ENCODE measurements at regions of chr5 and their contacts with region 1.

Region 1: DNA sequence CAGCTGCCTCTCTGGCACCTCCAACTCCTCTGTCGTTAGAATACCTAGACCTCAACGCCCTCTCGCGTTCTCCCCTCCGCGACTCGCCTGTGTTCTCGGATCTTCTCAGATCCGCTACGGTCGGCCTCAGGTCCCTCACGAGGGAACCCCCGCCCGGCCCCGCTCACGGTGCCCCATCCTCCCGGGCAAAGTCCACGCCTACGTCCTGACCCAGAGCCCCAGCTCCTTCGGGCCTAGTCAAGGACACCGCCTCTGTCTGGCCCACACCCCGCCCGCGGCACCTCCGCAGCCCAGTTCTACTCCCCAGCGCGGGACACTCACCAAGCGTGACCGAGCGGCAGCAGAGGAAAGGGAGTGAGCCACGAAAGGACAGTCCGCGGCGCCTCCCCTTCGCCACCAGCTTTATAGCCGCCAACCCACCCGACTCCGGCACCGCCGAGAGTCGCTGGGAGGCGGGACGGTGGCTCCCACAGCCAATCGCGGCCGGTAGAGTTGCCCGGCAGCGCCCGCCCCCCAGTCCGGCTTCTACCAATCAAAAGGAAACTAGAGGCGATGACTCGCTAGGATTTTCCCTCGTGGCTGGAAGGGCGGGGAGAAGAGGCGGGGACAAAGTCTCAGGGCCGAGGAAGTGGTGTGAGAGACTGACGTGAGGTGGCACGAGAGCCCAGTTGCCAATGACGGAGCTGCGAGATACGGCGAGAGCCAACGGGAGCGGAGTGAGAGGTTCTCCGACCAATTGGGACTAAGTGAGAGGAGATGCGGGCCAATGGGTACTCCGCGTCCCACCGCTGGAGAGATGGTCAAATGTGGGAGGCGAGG is at the start of gene HMGCS1:
- DNase-seq: peak; percentile 98 to 99
- ATAC-seq: peak; percentile 99
- H3K4me3 ChIP-seq: peak within 1 kb of the TSS; percentile 77 to 93 (median 83)
- H3K27ac ChIP-seq: peak within 1 kb of the TSS; percentile 89 to 94 (median 90)
- H3K4me1 ChIP-seq: peaks cover 18 to 28% of the 10 kb centered on the region in 2 donors
- H3K27me3 ChIP-seq: no peaks in the 10 kb centered on the region
- CTCF ChIP-seq: peak in 1 of 5 experiments; percentile 14
- POLR2A ChIP-seq: peak; percentile 87 to 96
- total RNA-seq, gene HMGCS1: 6.1 to 15.0 (median 8.2) TPM

Region 2: GRCh38 chr5:42908509-42909488 is 404.4 kb before region 1 on chr5:
- in situ Hi-C with region 1: loop called in 1 of 4 experiments (anchors 25 kb)
- intact Hi-C with region 1: loop called (anchors 10 kb)
- DNase-seq: peak; percentile 75 to 81
- ATAC-seq: peak; percentile 92 to 96
- H3K4me3 ChIP-seq: peak overlapping the region; percentile 52 to 64 (median 56)
- H3K27ac ChIP-seq: peak overlapping the region in 1 of 4 donors; percentile 11
- H3K4me1 ChIP-seq: no peaks in the 10 kb centered on the region
- H3K27me3 ChIP-seq: no peaks in the 10 kb centered on the region
- CTCF ChIP-seq: peak; percentile 73 to 87 (median 83)
- POLR2A ChIP-seq: no peak

Region 3: DNA sequence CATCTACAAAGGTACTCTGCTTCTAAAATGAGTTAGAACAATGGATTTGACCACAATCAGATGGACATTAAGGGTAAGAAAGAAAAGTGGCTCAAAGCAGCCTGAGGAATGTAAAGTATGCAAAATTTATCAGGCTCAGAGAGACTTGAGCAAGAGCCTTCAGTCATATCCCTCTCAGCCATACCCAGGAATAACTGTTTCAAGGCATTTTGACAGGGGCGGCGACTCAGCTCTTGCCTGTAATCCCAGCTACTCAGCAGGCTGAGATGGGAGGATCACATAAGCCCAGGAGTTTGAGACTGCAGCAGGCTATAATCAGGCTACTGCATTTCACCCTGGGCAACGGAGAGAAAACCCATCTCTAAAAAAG is 234.3 kb before region 1 on chr5:
- in situ Hi-C with region 1: loop called in 1 of 4 experiments (anchors 25 kb)
- intact Hi-C with region 1: no loop called
- DNase-seq: no peak
- ATAC-seq: no peak
- H3K4me3 ChIP-seq: no peak overlapping the region
- H3K27ac ChIP-seq: no peak overlapping the region
- H3K4me1 ChIP-seq: peaks cover 11 to 14% of the 10 kb centered on the region in 2 donors
- H3K27me3 ChIP-seq: no peaks in the 10 kb centered on the region
- CTCF ChIP-seq: no peak
- POLR2A ChIP-seq: no peak

Region 4: DNA sequence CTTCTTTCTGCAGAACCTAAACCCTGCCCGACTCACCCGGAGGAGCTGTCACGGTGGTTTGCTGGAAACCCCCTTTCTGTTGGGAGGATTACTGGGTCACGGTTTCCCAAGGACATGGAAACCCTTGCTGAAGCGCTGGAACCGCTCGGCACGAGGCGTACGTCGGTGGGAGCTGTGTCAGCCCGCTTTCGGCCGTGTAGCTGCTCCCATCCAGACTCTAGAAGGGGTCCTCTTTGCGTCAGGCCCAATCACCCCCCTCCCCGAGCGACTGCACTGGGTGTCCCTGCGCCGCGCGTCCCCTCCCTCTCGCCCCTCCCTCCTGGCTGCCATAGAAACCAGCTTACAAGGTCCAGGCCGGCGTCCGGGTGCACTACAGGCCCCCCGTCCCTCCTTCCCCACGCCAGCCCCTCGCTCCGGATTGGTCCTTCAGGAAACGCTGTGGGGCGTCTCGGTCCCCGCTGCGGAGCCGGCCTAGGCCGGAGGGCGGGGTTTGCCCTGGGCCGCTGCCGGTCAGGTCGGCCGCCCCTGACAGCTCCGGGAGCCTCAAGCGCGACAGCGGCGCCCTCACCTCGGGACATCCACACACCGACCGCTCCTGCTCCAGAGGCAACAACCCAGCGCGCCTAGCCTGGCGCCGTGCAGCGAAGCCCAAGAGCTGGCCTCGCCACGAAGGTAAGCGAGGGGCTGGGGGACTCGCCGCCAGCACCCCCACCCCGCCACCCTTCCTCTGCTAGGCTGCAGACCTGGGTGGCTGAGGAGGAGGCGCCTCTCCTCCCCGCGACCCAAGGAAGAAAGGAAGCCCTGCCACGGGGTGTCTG is 121.3 kb before region 1 on chr5 and contains the start of gene NIM1K:
- in situ Hi-C with region 1: no loop called
- intact Hi-C with region 1: loop called (anchors 5 kb)
- DNase-seq: peak; percentile 19 to 23
- ATAC-seq: peak; percentile 66 to 68
- H3K4me3 ChIP-seq: peak within 1 kb of the TSS; percentile 62 to 75 (median 70)
- H3K27ac ChIP-seq: peak within 1 kb of the TSS; percentile 14 to 68 (median 42)
- H3K4me1 ChIP-seq: peaks cover 0 to 25% of the 10 kb centered on the region in 2 donors
- H3K27me3 ChIP-seq: no peaks in the 10 kb centered on the region
- CTCF ChIP-seq: no peak
- POLR2A ChIP-seq: no peak
- total RNA-seq, gene NIM1K: 0.41 TPM in 1 of 4 donors, not detected in the others

Region 5: DNA sequence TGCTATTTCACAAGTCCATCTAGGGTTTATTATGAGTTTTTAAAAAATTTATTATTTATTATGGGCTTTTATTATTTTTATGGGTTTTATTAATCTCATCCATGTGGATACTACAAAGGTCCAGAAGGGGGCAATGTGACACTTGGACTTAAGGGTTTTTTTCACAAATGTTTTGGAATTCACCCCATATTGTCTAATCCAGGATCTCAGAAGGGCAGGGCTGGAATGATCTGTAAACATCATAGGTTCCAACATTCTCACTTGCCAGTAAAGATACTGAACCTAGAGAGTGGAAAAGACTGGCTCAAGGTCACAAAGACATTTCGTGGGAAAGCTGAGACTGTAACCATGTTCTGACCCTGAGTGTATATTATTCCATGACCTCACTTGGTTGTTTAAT is 85.6 kb before region 1 on chr5:
- in situ Hi-C with region 1: no loop called
- intact Hi-C with region 1: no loop called
- DNase-seq: no peak
- ATAC-seq: no peak
- H3K4me3 ChIP-seq: no peak overlapping the region
- H3K27ac ChIP-seq: no peak overlapping the region
- H3K4me1 ChIP-seq: no peaks in the 10 kb centered on the region
- H3K27me3 ChIP-seq: no peaks in the 10 kb centered on the region
- CTCF ChIP-seq: peak in 1 of 5 experiments; percentile 13
- POLR2A ChIP-seq: no peak

Region 6: DNA sequence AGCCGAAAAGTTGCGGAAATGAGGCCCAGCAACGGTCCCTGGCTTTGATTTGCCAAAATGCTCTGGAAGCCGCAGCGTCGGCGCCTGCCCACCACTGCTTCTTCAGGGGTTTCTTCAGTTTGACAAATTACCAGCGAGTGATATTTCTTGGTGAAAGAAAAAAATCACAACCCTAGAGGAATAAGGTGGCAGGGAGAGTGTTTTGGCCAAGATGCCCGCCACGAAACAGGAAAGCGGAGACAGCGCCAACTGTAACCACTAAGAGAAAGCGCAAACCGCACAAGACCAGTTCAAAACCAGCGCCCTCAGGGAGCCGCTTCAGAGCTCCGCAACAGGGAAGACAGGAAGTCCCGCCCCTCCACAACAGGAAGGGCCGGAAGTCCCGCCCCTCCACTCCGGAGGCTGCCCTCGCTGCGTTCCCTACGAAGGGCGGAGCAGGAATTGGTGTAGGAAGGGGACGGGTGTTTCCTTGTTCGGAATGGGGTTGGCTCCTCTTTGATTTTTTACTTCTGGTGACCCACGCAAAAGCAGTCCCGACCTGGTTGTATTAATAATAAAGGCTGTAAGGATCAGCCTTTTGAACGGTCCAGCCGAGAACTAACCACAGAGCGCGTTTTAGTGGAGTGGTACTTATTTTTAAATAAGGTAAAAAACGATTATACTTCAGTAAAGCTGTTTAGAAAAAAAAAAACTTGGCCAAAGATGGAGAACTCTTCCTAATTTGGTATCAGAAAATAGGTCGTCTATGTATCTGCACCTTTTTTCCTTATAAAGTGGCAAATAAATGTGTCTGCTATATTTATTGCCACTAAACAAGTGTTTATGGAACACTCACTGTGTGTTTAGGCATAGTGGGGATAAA is 201.8 kb after region 1 on chr5 and contains the start of gene C5orf34:
- in situ Hi-C with region 1: no loop called
- intact Hi-C with region 1: loop called (anchors 10 kb)
- DNase-seq: peak; percentile 95
- ATAC-seq: peak; percentile 99 to 100
- H3K4me3 ChIP-seq: peak within 1 kb of the TSS; percentile 69 to 83 (median 81)
- H3K27ac ChIP-seq: peak within 1 kb of the TSS; percentile 80 to 90 (median 85)
- H3K4me1 ChIP-seq: peaks cover 12% of the 10 kb centered on the region in 2 donors
- H3K27me3 ChIP-seq: no peaks in the 10 kb centered on the region
- CTCF ChIP-seq: no peak
- POLR2A ChIP-seq: peak; percentile 40 to 50
- total RNA-seq, gene C5orf34: 0.16 to 0.27 (median 0.20) TPM in 3 of 4 donors, not detected in the other

Measured in gastrocnemius medialis (tissue), 4 donors.